ENCODE measurements at regions of chr3 and their contacts with region 1.

Region 1: GRCh38 chr3:119498186-119498987 is at the start of gene TIMMDC1:
- DNase-seq: peak; percentile 83
- ATAC-seq: peak; percentile 96
- H3K4me3 ChIP-seq: peak within 1 kb of the TSS; percentile 75
- H3K27ac ChIP-seq: peak within 1 kb of the TSS; percentile 94
- H3K4me1 ChIP-seq: no peaks in the 10 kb centered on the region
- H3K27me3 ChIP-seq: no peaks in the 10 kb centered on the region
- CTCF ChIP-seq: no peak
- EP300 ChIP-seq: peak in 1 of 2 experiments; percentile 27; a peak in 1 of 4 replicates
- POLR2A ChIP-seq: peak; percentile 96
- RAD21 ChIP-seq: no peak
- polyA plus RNA-seq, gene TIMMDC1: 136 to 146 TPM

Region 2: GRCh38 chr3:119463171-119464169 is 34.9 kb before region 1 on chr3 and contains the start of gene TMEM39A:
- CTCF ChIA-PET with region 1: interaction called, 8 read pairs
- POLR2A ChIA-PET with region 1: interaction called, 57 read pairs
- RAD21 ChIA-PET with region 1: interaction called, 51 read pairs
- SMC1A ChIA-PET with region 1: interaction called, 30 read pairs
- in situ Hi-C with region 1: no loop called
- intact Hi-C with region 1: loop called (anchors 2 kb)
- DNase-seq: peak; percentile 96
- ATAC-seq: peak; percentile 93
- H3K4me3 ChIP-seq: peak within 1 kb of the TSS; percentile 97
- H3K27ac ChIP-seq: peak within 1 kb of the TSS; percentile 90
- H3K4me1 ChIP-seq: peaks cover 9% of the 10 kb centered on the region
- H3K27me3 ChIP-seq: no peaks in the 10 kb centered on the region
- CTCF ChIP-seq: no peak
- EP300 ChIP-seq: peak; percentile 10 to 83; a peak in 2 of 4 replicates
- POLR2A ChIP-seq: peak; percentile 96
- RAD21 ChIP-seq: no peak
- polyA plus RNA-seq, gene TMEM39A: 10.8 to 21.2 TPM

Region 3: DNA sequence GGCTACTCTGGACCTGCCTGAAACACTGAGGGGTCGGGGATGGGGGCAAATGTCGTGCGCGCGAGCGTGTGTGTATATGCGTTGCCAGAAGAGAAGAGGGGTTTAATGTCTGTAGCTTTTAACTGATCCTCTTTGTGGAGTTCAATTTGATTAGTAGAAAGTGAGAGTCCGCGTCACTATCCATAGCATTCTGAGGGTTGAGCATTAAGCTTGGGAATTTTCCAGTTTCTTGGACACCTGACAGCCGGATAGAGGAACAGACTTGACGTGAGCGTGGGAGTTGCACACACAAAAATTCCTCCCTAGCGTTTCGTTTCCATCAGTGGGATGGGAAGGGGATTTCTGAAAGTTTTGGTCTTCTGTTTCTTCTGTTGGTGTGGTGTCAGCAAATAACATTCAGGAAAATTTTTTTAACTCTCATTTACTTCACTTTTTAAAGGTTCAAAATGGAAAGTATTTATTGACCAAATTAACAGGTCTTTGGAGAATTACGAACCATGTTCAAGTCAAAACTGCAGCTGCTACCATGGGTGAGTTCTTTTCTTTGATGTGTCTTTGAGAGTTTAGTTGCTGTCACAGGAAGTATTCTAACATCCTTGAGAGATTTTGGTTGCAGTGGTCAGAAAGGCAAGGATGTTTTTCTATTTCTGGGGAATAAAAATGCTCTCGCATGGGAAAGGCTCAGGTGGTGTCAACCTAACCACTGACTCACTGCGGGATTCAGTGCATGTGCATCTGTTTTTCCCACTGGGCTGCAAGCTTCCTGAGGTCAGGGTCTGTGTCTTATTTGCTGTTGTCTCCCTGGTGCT is 28.8 kb before region 1 on chr3:
- CTCF ChIA-PET with region 1: no interaction called
- POLR2A ChIA-PET with region 1: interaction called, 57 read pairs
- RAD21 ChIA-PET with region 1: interaction called, 51 read pairs
- SMC1A ChIA-PET with region 1: interaction called, 30 read pairs
- in situ Hi-C with region 1: no loop called
- intact Hi-C with region 1: loop called (anchors 2 kb)
- DNase-seq: peak; percentile 25
- ATAC-seq: peak; percentile 74
- H3K4me3 ChIP-seq: peak overlapping the region; percentile 90
- H3K27ac ChIP-seq: peak overlapping the region; percentile 96
- H3K4me1 ChIP-seq: no peaks in the 10 kb centered on the region
- H3K27me3 ChIP-seq: no peaks in the 10 kb centered on the region
- CTCF ChIP-seq: no peak
- EP300 ChIP-seq: 0 out of 4 replicates have a peak, but pooled peaks of 1 of the 2 experiments have one; percentile 14
- POLR2A ChIP-seq: no peak
- RAD21 ChIP-seq: no peak

Region 4: DNA sequence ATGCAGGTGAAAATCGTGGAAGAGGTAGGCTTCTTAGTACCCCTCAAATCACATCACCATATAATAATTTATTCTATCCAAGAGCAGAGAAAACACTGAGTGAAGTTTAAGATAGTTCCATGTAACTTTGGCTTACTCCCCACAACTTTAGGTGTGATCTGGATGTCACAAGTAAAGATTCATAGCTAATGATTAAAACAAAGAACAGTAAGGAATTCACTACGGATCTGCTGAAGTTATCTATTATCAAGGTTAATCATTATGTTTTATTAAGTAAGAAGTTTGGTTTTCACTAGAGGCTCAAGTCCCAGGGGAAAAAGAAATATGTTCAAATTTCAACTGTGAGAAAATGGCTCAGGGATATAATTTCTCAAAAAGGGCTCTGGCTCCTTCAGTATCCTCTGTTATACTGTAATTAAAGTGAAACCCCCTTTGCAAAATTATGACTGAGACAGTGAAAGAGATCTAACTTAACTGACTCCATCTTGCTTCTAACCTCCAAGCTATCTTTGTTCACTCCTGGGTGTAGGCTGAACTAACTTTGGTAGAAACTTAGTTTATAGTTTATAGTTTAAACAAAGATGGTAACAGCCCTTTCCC is 43.9 kb after region 1 on chr3:
- CTCF ChIA-PET with region 1: no interaction called
- POLR2A ChIA-PET with region 1: interaction called, 11 read pairs
- RAD21 ChIA-PET with region 1: interaction called, 8 read pairs
- SMC1A ChIA-PET with region 1: interaction called, 8 read pairs
- in situ Hi-C with region 1: no loop called
- intact Hi-C with region 1: no loop called
- DNase-seq: no peak
- ATAC-seq: peak; percentile 26
- H3K4me3 ChIP-seq: 0 out of 2 replicates have a peak overlapping the region, but pooled peaks have one; percentile 17
- H3K27ac ChIP-seq: peak overlapping the region; percentile 55
- H3K4me1 ChIP-seq: peaks cover 16% of the 10 kb centered on the region
- H3K27me3 ChIP-seq: no peaks in the 10 kb centered on the region
- CTCF ChIP-seq: no peak
- EP300 ChIP-seq: no peak
- POLR2A ChIP-seq: no peak
- RAD21 ChIP-seq: no peak

Region 5: DNA sequence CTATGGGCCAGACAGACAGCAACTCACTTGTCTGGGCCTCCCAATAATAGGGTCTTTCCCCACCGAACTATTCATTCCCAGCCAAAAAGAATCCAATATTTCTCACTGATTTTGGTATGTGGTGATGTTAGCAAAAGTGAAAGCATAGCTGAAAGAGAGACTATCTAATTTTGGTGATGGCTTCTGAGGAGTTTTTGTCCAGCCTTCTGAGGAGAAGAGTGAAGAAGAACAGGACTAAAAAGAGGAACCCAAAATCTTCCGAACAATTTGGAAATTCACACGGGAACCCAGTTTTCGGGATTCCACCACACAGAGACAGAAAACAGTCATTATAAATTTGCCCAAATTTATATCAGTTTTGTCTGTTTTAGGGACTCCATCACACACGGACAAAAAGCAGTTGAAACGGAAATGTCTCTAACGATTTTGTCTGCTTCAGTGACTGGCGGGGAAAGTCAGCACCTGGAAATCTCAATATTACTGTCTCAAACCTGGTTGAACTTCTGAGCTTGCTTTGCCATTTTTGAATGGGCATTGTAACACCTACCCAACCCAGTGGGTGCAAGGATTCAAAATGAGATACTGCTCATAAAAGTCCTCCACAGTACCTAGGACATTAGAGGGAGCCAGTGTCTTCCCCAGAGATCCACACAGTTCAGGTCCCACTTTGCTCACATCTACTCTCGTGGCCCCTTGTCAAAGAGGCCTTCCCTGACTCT is 52.0 kb after region 1 on chr3:
- CTCF ChIA-PET with region 1: interaction called, 5 read pairs
- POLR2A ChIA-PET with region 1: interaction called, 9 read pairs
- RAD21 ChIA-PET with region 1: interaction called, 5 read pairs
- SMC1A ChIA-PET with region 1: interaction called, 21 read pairs
- in situ Hi-C with region 1: no loop called
- intact Hi-C with region 1: no loop called
- DNase-seq: no peak
- ATAC-seq: peak; percentile 52
- H3K4me3 ChIP-seq: peak overlapping the region; percentile 57
- H3K27ac ChIP-seq: peak overlapping the region; percentile 93
- H3K4me1 ChIP-seq: peaks cover 43% of the 10 kb centered on the region
- H3K27me3 ChIP-seq: no peaks in the 10 kb centered on the region
- CTCF ChIP-seq: peak; percentile 11 to 50 (median 12); a peak in 3 of 6 replicates
- EP300 ChIP-seq: no peak
- POLR2A ChIP-seq: peak; percentile 54
- RAD21 ChIP-seq: peak; percentile 52

Region 6: DNA sequence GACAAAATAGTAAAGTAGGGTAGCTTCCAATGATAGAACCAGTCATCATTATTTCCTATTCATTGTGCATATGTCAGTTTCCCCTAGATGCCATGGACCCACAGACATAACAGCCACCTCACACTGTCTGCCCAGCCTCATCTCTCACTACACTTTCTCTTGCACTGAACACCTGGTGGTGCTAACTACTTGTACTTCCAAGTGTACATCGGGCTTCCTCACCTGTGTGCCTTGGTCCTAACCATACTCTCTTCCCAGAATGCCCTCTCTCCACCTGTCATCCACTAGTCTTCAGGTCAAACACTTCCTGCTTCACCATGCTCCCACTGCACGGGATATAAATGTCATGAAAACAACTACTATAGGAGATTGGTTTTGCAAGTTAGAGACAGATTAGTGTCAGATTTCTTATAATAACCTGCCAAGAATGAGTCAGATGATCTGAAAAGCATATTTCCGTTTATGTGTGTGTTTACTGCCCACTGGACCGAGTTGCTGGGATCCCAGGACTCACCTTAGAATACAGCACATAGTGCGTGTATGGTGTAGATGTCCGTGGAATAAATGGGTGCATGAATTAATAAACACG is 120.6 kb after region 1 on chr3:
- CTCF ChIA-PET with region 1: no interaction called
- POLR2A ChIA-PET with region 1: no interaction called
- RAD21 ChIA-PET with region 1: no interaction called
- SMC1A ChIA-PET with region 1: no interaction called
- in situ Hi-C with region 1: no loop called
- intact Hi-C with region 1: no loop called
- DNase-seq: no peak
- ATAC-seq: no peak
- H3K4me3 ChIP-seq: no peak overlapping the region
- H3K27ac ChIP-seq: no peak overlapping the region
- H3K4me1 ChIP-seq: no peaks in the 10 kb centered on the region
- H3K27me3 ChIP-seq: no peaks in the 10 kb centered on the region
- CTCF ChIP-seq: peak in 1 of 3 experiments; percentile 19; a peak in 1 of 6 replicates
- EP300 ChIP-seq: no peak
- POLR2A ChIP-seq: no peak
- RAD21 ChIP-seq: peak; percentile 43; the same call in 1 of the 2 replicates